ENCODE measurements at regions of chr1 and their contacts with region 1.

Region 1: GRCh38 chr1:65020774-65021173 is 54.4 kb upstream of the JAK1 start:
- DNase-seq: peak; percentile 30
- ATAC-seq: peak; percentile 98
- H3K4me3 ChIP-seq: no peak overlapping the region
- H3K27ac ChIP-seq: no peak overlapping the region
- H3K4me1 ChIP-seq: no peaks in the 10 kb centered on the region
- H3K27me3 ChIP-seq: no peaks in the 10 kb centered on the region
- CTCF ChIP-seq: peak; percentile 59
- EP300 ChIP-seq: no peak
- POLR2A ChIP-seq: no peak
- RAD21 ChIP-seq: no peak; the same call in 1 of the 2 replicates

Region 2: DNA sequence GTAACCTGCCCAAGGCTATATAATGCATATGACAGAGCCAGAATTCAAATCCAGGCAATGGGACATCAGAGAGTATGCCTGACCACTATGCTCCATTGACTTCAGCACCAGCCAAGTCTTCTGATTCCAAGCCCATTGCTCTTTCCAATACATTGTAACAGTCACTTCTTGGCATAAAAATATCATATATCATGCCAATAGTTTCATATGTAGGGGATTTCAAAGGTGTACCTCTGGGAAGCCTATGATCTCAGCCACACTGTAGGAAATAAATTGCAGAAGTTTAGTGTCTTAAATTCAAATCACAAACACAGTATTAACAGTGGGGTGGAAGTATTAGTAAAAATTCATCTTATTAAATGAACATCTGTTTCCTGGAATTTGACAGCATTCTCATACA is 1277.0 kb before region 1 on chr1:
- CTCF ChIA-PET with region 1: no interaction called
- POLR2A ChIA-PET with region 1: no interaction called
- in situ Hi-C with region 1: no loop called
- intact Hi-C with region 1: loop called (anchors 5 kb)
- DNase-seq: no peak
- ATAC-seq: no peak
- H3K4me3 ChIP-seq: no peak overlapping the region
- H3K27ac ChIP-seq: no peak overlapping the region
- H3K4me1 ChIP-seq: peaks cover 9% of the 10 kb centered on the region; the same call in 1 of the 2 replicates
- H3K27me3 ChIP-seq: no peaks in the 10 kb centered on the region; a peak in 2 of 5 replicates
- CTCF ChIP-seq: no peak
- EP300 ChIP-seq: no peak
- POLR2A ChIP-seq: no peak
- RAD21 ChIP-seq: no peak

Region 3: DNA sequence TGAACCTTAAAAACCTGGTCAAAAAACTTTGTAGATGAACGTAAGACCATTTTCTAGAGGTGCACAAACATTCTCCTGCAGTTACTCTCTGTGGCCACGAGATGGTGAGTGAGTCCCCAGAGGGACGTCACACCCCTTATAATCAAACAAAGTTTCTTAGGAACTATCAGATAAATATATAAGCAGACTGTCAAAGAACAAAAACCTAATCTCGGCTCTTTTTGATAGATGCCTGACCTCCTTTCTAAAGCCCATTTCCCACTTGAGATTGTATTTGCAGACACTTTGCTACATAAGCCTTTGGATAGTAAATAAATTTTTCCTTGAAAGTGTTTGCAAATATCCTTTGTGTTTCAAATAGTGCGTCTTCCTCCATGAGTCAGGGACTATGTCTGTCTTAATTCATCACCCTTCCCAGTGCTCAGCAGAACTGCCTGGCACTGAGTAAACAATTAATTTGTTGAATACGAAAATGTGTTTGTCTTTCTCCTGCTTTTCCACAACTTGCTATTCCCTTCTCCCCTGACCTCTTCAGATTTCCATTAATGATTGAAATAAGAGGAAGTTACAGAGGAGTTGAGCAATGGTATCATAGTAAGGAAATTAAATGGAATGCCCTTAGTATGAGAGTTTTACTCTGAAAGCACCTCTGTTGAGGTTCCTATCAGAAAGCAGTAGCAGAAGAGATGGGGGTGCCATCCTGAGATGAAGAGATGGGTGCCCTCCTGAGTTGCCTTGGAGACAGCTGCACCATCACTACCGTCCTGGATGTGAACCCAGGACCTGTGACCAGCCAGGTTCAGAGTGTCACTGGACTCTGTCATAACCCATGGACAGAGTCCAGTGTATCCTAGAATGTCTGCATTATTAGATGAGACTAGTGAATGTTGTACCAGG is 333.7 kb before region 1 on chr1:
- CTCF ChIA-PET with region 1: no interaction called
- POLR2A ChIA-PET with region 1: no interaction called
- in situ Hi-C with region 1: no loop called
- intact Hi-C with region 1: loop called (anchors 1 kb)
- DNase-seq: peak; percentile 37
- ATAC-seq: peak; percentile 79
- H3K4me3 ChIP-seq: no peak overlapping the region
- H3K27ac ChIP-seq: no peak overlapping the region
- H3K4me1 ChIP-seq: no peaks in the 10 kb centered on the region
- H3K27me3 ChIP-seq: peaks cover 0 to 8% of the 10 kb centered on the region in 2 experiments; a peak in 2 of 5 replicates
- CTCF ChIP-seq: peak; percentile 69
- EP300 ChIP-seq: no peak
- POLR2A ChIP-seq: no peak
- RAD21 ChIP-seq: peak; percentile 41

Region 4: DNA sequence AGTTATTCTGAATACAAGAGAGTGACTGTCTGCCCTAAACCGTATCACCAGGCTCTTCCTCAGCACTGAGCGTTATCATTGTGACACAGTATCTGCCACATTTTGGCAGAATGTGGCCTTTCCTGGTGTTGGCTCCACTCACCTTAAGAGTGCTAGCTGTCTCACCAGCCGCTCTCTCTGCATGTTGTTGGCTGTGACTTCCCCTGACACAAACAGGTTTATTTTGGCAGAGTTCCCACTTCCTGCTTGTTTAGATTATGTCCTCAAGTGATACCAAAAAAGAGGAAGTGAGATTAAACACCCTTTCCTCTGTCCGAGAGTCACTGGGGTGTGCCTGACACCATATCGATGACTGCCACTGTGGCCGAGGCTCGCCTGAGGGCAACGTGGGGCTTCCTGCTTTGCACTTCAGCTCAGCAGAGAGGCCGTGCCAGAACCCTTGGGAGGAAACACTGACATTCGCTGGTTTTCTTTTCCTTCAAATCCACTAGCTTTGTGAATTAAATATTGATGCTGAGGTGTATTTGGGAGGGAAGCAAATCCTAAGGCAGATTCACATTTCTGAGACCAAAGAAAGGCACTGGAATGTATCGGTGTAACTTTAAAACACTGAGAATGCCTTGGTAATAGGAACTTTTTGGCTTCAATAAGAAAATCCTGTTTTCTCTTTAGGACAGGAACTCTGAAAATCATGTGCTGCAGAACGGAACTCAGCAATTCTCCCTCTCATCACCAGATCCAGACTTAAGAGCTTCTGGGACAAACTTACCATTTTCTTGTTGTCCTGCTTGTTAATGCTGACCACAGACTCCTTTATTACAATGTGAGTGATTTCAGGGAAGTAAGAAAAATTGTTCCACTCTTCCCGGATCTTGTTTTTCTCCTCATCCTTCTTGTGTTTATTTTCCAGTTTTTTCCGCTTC is 156.5 kb before region 1 on chr1:
- CTCF ChIA-PET with region 1: interaction called, 8 read pairs
- POLR2A ChIA-PET with region 1: no interaction called
- in situ Hi-C with region 1: no loop called
- intact Hi-C with region 1: loop called (anchors 1 kb)
- DNase-seq: no peak
- ATAC-seq: no peak; the same call in 2 of the 3 replicates
- H3K4me3 ChIP-seq: no peak overlapping the region
- H3K27ac ChIP-seq: no peak overlapping the region
- H3K4me1 ChIP-seq: 0 out of 2 replicates have a peak, but pooled peaks cover 4% of the 10 kb centered on the region
- H3K27me3 ChIP-seq: no peaks in the 10 kb centered on the region
- CTCF ChIP-seq: no peak
- EP300 ChIP-seq: no peak
- POLR2A ChIP-seq: no peak
- RAD21 ChIP-seq: no peak

Region 5: DNA sequence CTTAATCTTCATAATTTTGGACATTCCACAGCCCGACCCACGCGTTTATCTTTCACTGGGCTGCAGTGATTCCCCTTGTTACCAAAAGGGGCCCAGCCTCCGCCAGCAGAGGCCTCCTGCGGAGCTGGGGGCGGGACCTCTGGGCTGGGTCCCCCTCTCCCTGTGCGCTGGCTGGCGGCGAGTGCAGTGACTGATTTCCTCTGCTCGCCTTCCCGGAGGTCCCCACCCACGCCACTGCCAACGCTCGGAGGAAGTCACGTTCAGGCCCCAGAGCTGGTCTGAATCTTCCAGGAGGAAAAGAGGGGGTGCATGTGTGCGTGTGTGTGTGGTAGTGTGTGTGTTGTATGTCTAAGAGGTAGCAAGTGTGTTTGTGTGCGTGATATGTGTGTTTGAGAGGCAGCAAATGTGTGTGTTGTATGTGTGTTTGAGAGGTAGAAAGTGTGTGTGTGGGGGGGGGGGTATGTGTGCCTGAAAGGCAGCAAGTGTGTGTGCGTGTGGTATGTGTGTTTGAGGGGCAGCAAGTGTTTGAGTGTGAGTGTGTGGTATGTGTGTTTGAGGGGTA is 19.5 kb before region 1 on chr1:
- CTCF ChIA-PET with region 1: no interaction called
- POLR2A ChIA-PET with region 1: no interaction called
- in situ Hi-C with region 1: no loop called
- intact Hi-C with region 1: no loop called
- DNase-seq: no peak
- ATAC-seq: no peak
- H3K4me3 ChIP-seq: no peak overlapping the region
- H3K27ac ChIP-seq: no peak overlapping the region
- H3K4me1 ChIP-seq: peaks cover 14% of the 10 kb centered on the region
- H3K27me3 ChIP-seq: peaks cover 3 to 26% of the 10 kb centered on the region in 2 experiments
- CTCF ChIP-seq: no peak
- EP300 ChIP-seq: no peak
- POLR2A ChIP-seq: no peak
- RAD21 ChIP-seq: no peak